ENCODE measurements at regions of chr10 and their contacts with region 1.

Region 1: DNA sequence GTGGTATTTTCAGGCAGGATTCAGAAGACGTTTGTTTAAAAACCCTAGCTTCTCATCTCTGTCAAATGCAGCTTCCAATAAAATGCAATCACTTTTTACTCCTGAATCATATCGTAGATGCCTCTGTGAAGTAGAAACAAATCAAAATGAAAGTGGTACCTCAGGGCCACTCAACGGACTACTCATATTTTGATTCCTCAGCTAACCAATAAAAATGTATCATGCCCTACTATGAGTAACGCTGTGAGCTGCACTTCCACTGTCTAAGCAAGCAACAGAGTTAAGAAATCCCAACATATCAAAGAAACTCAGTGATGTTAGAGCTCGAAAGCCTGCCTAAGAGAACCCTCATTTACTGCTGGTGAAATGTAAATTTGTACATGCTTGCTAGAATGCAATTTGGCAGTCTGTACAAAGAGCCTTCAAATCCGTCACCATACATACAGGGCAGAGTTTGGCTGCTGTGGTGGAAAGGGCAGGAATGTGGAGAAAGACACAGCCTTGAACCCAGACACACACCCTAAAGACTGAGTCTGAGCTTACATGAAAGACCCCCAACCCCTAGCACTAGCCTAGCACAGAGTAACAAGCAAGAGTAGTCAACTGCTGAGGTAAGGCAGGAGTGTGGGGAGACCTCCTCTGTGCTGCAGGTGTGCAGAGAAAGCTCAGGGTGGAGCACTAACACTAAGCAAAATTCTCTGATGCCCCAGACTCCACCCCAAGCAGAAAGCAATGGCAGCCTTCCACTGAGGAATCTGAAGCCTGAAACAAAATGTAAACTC is 151.5 kb downstream of the ANK3 start:
- DNase-seq: peak; percentile 24
- H3K4me3 Mint-ChIP-seq: peak overlapping the region; percentile 69
- H3K27ac Mint-ChIP-seq: peak overlapping the region; percentile 66
- H3K4me1 Mint-ChIP-seq: peaks cover 28% of the 10 kb centered on the region
- H3K27me3 Mint-ChIP-seq: no peaks in the 10 kb centered on the region

Region 2: DNA sequence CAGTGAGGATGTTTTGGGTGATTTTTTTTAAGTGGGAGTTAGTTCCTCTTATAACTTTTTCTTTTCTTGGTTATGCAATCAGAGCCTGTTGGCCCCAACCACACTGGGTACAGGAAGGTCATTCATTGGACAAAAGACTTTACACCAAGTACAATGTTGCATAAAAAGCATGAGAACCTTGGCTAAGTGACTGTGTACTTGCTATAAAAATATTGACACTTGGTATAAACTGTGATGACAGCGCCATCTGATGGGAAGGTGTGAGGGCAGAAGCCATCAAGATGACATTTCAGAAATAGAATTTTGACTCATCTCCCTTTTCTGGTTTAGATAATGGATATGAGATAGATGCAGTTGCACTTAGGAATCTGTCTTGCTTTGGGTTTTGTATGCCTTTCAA is 205.4 kb before region 1 on chr10:
- intact Hi-C with region 1: loop called (anchors 5 kb)
- DNase-seq: peak; percentile 20
- H3K4me3 Mint-ChIP-seq: no peak overlapping the region
- H3K27ac Mint-ChIP-seq: no peak overlapping the region
- H3K4me1 Mint-ChIP-seq: peaks cover 14% of the 10 kb centered on the region
- H3K27me3 Mint-ChIP-seq: no peaks in the 10 kb centered on the region

Region 3: GRCh38 chr10:60224066-60224705 is 14.0 kb before region 1 on chr10:
- intact Hi-C with region 1: no loop called
- DNase-seq: no peak
- H3K4me3 Mint-ChIP-seq: no peak overlapping the region
- H3K27ac Mint-ChIP-seq: no peak overlapping the region
- H3K4me1 Mint-ChIP-seq: no peaks in the 10 kb centered on the region
- H3K27me3 Mint-ChIP-seq: no peaks in the 10 kb centered on the region

Region 4: DNA sequence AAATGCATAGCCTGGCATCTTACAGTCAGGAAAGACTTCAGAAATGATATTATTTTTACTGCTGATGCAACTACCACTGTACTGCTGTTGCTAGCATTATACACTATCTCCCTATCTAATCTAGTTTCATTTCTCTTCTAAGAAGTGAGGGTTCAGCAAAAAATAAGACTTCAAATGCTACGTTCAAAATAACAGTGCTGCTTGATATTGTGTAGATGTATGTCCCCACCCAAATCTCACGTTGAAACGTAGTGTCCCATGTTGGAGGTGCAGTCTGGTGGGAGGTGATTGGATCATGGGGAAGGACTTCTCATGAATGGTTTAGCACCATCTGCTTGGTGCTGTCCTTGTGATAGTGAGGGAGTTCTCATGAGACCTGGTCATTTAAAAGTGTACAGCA is 22.2 kb after region 1 on chr10:
- intact Hi-C with region 1: loop called (anchors 1 kb)
- DNase-seq: no peak
- H3K4me3 Mint-ChIP-seq: no peak overlapping the region
- H3K27ac Mint-ChIP-seq: no peak overlapping the region
- H3K4me1 Mint-ChIP-seq: peaks cover 26% of the 10 kb centered on the region
- H3K27me3 Mint-ChIP-seq: no peaks in the 10 kb centered on the region

Region 5: DNA sequence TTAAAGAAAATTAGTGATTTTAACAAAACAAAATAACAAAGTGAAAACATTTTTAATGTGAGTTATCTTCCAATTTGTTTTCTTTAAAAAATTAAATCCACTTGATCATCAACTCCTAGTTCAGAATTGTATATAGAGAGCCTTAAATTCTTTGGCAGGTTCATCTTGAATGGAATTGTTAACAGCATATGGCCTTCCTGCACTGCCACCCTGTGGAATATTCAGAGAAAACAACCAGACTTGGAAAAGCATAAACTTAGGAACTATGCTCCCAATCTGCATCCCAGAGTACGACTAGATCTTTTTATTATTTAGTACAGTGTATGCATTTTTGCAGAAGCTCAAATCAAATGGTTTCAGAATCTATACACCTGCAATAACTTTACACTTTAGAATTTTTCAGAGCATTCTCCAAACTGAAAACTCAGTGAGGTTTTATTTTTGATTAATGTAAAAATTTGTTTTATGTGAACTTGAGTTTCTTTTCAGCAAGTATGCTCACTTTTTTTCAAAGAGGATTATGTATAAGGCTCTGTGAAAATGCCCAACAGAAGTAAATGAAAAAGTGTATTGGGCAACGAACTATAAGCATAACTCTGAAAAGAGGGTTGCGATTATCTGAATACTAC is 196.4 kb after region 1 on chr10:
- intact Hi-C with region 1: loop called (anchors 2 kb)
- DNase-seq: no peak
- H3K4me3 Mint-ChIP-seq: no peak overlapping the region
- H3K27ac Mint-ChIP-seq: no peak overlapping the region
- H3K4me1 Mint-ChIP-seq: no peaks in the 10 kb centered on the region
- H3K27me3 Mint-ChIP-seq: no peaks in the 10 kb centered on the region

Region 6: DNA sequence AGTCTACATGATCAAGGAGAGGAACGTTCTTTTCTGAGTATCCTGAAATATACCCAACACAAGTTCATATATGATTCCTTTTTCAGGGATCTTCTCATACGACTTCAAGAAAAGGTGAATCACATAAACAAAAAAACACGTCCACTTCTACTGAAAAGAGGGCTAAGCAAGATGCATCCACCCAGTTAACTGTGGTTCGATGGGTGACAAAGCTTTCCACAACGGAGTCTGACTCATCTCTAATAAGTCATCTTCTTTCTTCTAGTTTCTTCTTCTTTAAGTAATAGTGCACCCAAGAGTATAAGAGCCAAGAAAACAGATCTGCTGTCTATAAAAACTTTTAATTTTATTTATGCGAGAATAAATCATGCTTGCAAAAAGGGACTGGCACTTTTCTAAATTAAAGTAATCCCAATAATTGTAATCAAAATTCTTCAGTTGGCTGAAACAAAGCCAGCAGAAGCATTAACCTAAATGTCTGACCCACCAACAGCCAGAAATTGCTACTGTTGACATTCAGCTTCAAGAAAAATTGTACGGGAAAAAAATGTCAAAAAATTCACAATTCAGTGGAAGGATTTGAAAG is 298.5 kb after region 1 on chr10:
- intact Hi-C with region 1: loop called (anchors 1 kb)
- DNase-seq: no peak
- H3K4me3 Mint-ChIP-seq: no peak overlapping the region
- H3K27ac Mint-ChIP-seq: peak overlapping the region; percentile 17
- H3K4me1 Mint-ChIP-seq: peaks cover 37% of the 10 kb centered on the region
- H3K27me3 Mint-ChIP-seq: no peaks in the 10 kb centered on the region

Region 7: GRCh38 chr10:60572511-60573194 is 334.5 kb after region 1 on chr10:
- intact Hi-C with region 1: loop called (anchors 1 kb)
- DNase-seq: peak; percentile 14
- H3K4me3 Mint-ChIP-seq: peak overlapping the region; percentile 91
- H3K27ac Mint-ChIP-seq: peak overlapping the region; percentile 85
- H3K4me1 Mint-ChIP-seq: peaks cover 43% of the 10 kb centered on the region
- H3K27me3 Mint-ChIP-seq: no peaks in the 10 kb centered on the region

Region 8: DNA sequence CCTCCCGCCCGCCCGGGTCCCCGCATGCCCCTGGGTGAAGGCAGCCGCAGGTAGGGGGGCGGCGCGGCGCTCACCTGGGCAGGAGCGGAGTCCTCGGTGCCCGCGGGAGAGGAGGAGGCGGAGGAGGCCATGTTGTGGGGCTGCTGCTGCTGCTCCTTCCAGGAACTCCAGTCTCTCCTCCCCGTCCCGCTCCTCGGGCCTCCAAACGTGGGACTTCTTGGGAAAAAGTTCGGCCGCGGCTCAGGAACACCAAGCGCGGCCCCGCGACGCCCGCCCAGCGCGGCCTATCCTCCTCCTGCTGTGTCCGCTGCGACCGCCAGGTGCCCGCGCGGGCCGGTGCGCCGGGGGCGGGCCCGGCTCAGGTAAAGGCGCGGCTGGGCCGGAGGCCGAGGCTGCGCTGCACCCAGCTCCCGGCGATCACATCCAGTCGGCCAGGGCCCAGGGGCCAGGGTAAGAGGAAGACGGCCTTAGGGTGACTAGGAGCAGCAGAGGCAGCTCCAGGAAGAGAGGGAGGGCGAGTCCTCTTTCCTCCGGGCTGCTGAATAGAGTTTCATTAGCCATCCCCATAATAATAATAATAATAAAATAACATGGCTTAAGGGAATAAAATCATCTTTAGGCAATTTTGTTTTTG is 495.1 kb after region 1 on chr10:
- intact Hi-C with region 1: loop called (anchors 1 kb)
- DNase-seq: peak; percentile 28
- H3K4me3 Mint-ChIP-seq: no peak overlapping the region
- H3K27ac Mint-ChIP-seq: no peak overlapping the region
- H3K4me1 Mint-ChIP-seq: peaks cover 31% of the 10 kb centered on the region
- H3K27me3 Mint-ChIP-seq: peaks cover 4% of the 10 kb centered on the region